ENCODE measurements at regions of chr17 and their contacts with region 1.

Region 1: GRCh38 chr17:39450847-39451581 is at the start of gene MED1:
- DNase-seq: peak; percentile 95
- total RNA-seq, gene MED1: 24.2 TPM

Region 2: DNA sequence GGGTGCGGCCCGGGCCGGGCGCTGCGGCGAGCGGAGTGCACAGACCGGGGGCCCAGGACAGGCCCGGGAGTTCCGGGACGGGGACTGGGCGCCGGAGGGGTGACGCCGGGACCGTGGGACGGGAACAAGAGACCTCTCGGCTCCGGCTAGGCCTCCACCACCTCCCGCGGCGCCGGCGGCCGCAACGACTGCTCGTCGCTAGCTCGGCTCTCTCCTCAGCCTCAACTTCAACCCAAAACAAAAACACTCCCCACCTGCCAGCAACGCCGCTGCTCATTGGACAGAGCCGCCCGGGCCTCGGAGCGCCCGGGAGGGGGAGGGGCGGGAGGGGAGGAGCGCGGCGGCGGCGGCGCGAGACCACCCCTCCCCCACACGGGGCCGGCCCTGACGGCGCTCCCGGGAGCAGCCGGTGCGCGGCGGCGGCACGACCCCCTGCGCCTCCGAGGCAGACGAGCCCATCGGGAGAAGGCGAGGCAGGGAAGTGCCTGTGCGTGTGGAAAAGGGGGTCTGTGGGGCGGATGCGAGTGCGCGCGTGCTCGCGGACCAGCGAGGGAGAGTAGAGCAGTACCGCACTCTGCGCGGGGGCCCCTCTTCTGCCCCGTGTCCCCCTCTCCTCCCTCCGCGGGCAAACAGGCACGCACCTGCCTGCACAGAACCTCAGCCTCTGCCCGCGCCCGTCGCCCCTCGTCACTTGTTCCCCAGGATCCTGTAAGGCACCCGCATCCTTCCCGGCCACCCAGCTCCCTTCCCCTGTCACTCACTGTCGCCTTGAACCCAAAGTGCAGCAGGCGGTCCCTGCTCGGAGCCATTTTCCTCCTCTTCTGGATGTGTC is 49.4 kb before region 1 on chr17 and contains the start of gene FBXL20:
- intact Hi-C with region 1: loop called (anchors 2 kb)
- DNase-seq: peak; percentile 97
- total RNA-seq, gene FBXL20: 11.0 TPM

Region 3: DNA sequence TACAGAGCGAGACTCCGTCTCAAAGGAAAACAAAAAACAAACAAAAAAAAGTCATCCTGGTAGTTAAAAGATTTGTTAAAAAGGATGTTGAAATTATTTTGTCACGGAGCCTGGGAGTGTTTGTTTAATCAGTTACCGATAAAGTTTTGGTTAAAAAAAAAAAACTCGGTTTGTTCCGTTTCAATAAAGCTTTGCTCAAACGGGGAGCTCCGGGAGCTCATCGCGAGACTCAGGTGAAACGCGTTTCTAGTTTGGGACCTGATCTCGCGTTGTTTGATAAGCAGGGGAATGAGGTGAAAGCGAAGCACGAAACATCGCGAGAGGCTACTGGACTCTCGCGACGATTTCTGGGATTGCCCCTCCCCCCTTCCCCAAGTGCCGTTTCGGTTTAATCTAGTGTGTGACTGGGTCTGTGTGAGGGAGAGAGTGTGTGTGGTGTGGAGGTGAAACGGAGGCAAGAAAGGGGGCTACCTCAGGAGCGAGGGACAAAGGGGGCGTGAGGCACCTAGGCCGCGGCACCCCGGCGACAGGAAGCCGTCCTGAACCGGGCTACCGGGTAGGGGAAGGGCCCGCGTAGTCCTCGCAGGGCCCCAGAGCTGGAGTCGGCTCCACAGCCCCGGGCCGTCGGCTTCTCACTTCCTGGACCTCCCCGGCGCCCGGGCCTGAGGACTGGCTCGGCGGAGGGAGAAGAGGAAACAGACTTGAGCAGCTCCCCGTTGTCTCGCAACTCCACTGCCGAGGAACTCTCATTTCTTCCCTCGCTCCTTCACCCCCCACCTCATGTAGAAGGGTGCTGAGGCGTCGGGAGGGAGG is 10.3 kb after region 1 on chr17 and contains the start of gene CDK12:
- intact Hi-C with region 1: loop called (anchors 1 kb)
- DNase-seq: peak; percentile 97
- total RNA-seq, gene CDK12: 29.1 TPM

Region 4: GRCh38 chr17:39730095-39730921 is 279.3 kb after region 1 on chr17 and contains the start of gene MIEN1:
- intact Hi-C with region 1: no loop called
- DNase-seq: peak; percentile 97
- total RNA-seq, gene MIEN1: 48.5 TPM